ENCODE measurements at regions of chr12 and their contacts with region 1.

Region 1: GRCh38 chr12:53251477-53252348 is 16.4 kb upstream of the ESPL1 start:
- DNase-seq: peak; percentile 28 to 85 (median 71)
- ATAC-seq: peak; percentile 87
- H3K4me3 ChIP-seq: peak overlapping the region; percentile 71 to 86
- H3K4me3 Mint-ChIP-seq: peak overlapping the region; percentile 98
- H3K27ac ChIP-seq: peak overlapping the region; percentile 70 to 80
- H3K27ac Mint-ChIP-seq: peak overlapping the region; percentile 96
- H3K4me1 ChIP-seq: peaks cover 46% of the 10 kb centered on the region
- H3K4me1 Mint-ChIP-seq: peaks cover 50% of the 10 kb centered on the region
- H3K27me3 ChIP-seq: no peaks in the 10 kb centered on the region
- H3K27me3 Mint-ChIP-seq: no peaks in the 10 kb centered on the region
- CTCF ChIP-seq: peak; percentile 40

Region 2: GRCh38 chr12:52821826-52822660 is 429.7 kb before region 1 on chr12:
- CTCF ChIA-PET with region 1: no interaction called
- POLR2A ChIA-PET with region 1: no interaction called
- intact Hi-C with region 1: no loop called
- DNase-seq: no peak
- ATAC-seq: no peak
- H3K4me3 ChIP-seq: no peak overlapping the region
- H3K4me3 Mint-ChIP-seq: no peak overlapping the region
- H3K27ac ChIP-seq: no peak overlapping the region
- H3K27ac Mint-ChIP-seq: no peak overlapping the region
- H3K4me1 ChIP-seq: peaks cover 13% of the 10 kb centered on the region
- H3K4me1 Mint-ChIP-seq: peaks cover 15% of the 10 kb centered on the region
- H3K27me3 ChIP-seq: no peaks in the 10 kb centered on the region
- H3K27me3 Mint-ChIP-seq: no peaks in the 10 kb centered on the region
- CTCF ChIP-seq: no peak

Region 3: GRCh38 chr12:53287741-53288216 is 36.1 kb after region 1 on chr12:
- CTCF ChIA-PET with region 1: interaction called, 4 read pairs
- POLR2A ChIA-PET with region 1: no interaction called
- intact Hi-C with region 1: loop called in 1 of 2 experiments (anchors 1 kb)
- DNase-seq: peak; percentile 42 to 86 (median 75)
- ATAC-seq: peak; percentile 96
- H3K4me3 ChIP-seq: no peak overlapping the region
- H3K4me3 Mint-ChIP-seq: no peak overlapping the region
- H3K27ac ChIP-seq: no peak overlapping the region
- H3K27ac Mint-ChIP-seq: no peak overlapping the region
- H3K4me1 ChIP-seq: no peaks in the 10 kb centered on the region
- H3K4me1 Mint-ChIP-seq: peaks cover 4% of the 10 kb centered on the region
- H3K27me3 ChIP-seq: no peaks in the 10 kb centered on the region
- H3K27me3 Mint-ChIP-seq: no peaks in the 10 kb centered on the region
- CTCF ChIP-seq: peak; percentile 62

Region 4: DNA sequence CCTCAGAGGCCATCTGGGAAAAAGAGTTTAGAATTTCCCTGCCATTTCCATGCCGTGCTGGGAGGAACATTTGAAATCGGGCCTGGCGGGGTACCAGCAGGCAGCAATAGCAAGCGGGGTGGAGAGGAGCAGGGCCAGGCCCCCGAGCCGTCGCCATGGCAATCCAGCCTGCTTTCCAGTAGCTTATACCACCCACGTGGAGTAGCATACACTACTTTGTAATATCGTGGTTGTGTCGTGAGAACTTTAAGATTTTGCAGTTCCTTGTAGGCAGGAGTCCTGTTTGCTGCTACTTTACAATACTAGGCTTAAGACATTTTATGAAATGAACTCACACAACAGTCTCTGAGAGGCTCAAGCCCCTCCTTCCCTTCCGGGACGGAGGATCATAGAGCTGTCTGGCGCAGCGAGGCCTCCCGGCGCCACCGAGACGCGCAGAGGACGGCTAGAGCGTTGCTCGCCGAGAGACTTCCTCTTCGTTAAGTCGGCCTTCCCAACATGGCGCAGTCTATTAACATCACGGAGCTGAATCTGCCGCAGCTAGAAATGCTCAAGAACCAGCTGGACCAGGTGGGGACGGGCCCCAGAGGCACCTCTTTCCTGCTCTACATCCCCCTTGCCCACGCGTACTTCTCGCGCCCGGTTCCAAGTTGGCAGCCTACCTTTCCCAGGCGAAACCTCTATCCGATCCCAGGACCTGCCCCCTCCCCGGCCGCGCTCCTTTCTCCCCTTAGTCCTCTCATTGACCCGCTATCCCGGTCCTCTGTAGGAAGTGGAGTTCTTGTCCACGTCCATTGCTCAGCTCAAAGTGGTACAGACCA is 43.6 kb after region 1 on chr12 and contains the start of gene PFDN5:
- CTCF ChIA-PET with region 1: interaction called, 7 read pairs
- POLR2A ChIA-PET with region 1: no interaction called
- intact Hi-C with region 1: loop called in 1 of 2 experiments (anchors 2 kb)
- DNase-seq: peak; percentile 72 to 95 (median 87)
- ATAC-seq: peak; percentile 92
- H3K4me3 ChIP-seq: peak within 1 kb of the TSS; percentile 75 to 88
- H3K4me3 Mint-ChIP-seq: peak within 1 kb of the TSS; percentile 99
- H3K27ac ChIP-seq: peak within 1 kb of the TSS; percentile 80 to 82
- H3K27ac Mint-ChIP-seq: peak within 1 kb of the TSS; percentile 99
- H3K4me1 ChIP-seq: peaks cover 28% of the 10 kb centered on the region
- H3K4me1 Mint-ChIP-seq: peaks cover 51% of the 10 kb centered on the region
- H3K27me3 ChIP-seq: no peaks in the 10 kb centered on the region
- H3K27me3 Mint-ChIP-seq: no peaks in the 10 kb centered on the region
- CTCF ChIP-seq: no peak
- total RNA-seq, gene PFDN5: 741 to 751 TPM

Measured in CD8-positive, alpha-beta T cell (primary cell).